Activated CD4-positive, alpha-beta T cell treated with anti-CD3 and anti-CD28 coated beads for 36 hours (primary cell): ENCODE measurements at regions of chr17 and their contacts with region 1.

Region 1: GRCh38 chr17:70137451-70138230 is 31.7 kb upstream of the KCNJ2 start:
- DNase-seq: peak; percentile 59
- ATAC-seq: peak; percentile 98
- H3K4me3 Mint-ChIP-seq: no peak overlapping the region
- H3K27ac Mint-ChIP-seq: peak overlapping the region; percentile 66
- H3K4me1 Mint-ChIP-seq: peaks cover 21% of the 10 kb centered on the region
- H3K27me3 Mint-ChIP-seq: peaks cover 7% of the 10 kb centered on the region

Region 2: DNA sequence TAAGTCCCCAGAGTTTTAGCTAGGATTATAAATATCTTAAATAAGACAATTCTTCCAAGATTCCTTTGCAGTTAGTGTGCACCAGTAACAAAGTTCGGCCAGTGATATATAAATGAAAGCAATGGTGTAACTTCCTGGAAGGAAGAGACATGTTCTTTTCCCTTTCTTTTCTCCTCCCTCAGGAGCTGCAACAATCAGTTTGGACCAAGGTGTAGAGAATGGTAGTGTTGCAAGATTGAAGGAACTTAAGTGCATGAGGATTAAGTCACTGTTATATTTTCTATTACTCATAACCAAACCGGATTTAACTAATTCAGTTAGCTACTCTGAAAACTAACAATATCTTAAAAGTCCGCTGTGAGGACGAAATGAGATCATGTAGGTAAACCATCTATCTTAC is 131.5 kb before region 1 on chr17:
- CTCF ChIA-PET with region 1: no interaction called
- POLR2A ChIA-PET with region 1: no interaction called
- intact Hi-C with region 1: no loop called
- DNase-seq: no peak
- ATAC-seq: no peak
- H3K4me3 Mint-ChIP-seq: no peak overlapping the region
- H3K27ac Mint-ChIP-seq: no peak overlapping the region
- H3K4me1 Mint-ChIP-seq: no peaks in the 10 kb centered on the region
- H3K27me3 Mint-ChIP-seq: no peaks in the 10 kb centered on the region

Region 3: GRCh38 chr17:70107441-70107840 is 30.2 kb before region 1 on chr17:
- CTCF ChIA-PET with region 1: no interaction called
- POLR2A ChIA-PET with region 1: no interaction called
- intact Hi-C with region 1: loop called in 1 of 2 experiments (anchors 2 kb)
- DNase-seq: no peak
- ATAC-seq: no peak
- H3K4me3 Mint-ChIP-seq: no peak overlapping the region
- H3K27ac Mint-ChIP-seq: no peak overlapping the region
- H3K4me1 Mint-ChIP-seq: peaks cover 2% of the 10 kb centered on the region
- H3K27me3 Mint-ChIP-seq: peaks cover 6% of the 10 kb centered on the region